ENCODE measurements at regions of chr3 and their contacts with region 1.

Region 1: DNA sequence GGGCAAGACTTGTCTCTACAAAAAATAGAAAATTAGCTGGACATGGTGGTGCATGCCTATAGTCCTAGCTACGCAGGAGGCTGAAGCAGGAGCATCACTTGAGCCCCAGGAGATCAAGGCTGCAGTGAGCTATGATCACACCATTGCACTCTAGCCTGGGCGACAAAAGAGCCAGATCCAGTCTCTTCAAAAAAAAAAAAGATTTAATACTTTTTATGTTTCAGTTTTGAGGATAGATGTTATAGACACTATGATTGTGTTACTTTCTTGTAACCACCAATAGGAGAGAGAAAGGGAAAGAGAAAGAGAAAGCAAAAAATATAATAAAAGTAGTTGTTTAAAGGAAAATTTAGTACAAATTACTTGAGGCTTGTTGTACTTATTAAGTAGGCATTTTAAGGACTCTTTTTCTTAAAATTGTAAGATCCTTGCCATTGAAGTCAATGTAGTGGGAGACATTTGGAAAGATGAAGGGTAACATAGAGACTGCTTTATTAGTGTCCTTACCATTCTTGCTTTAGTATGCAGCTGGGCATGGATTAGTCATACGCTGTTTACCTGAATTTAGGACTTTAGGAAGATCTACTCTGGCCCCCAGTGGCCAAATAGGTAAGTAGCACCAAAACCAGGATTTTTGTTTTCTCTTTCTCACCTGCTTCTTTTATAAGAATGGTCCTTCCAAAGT is 35.1 kb upstream of the ZDHHC23 start:
- DNase-seq: peak in 22 of 35 experiments; percentile 0 to 69 (median 10)
- ATAC-seq: peak; percentile 85 to 96 (median 94)
- H3K4me3 ChIP-seq: no peak overlapping the region
- H3K4me3 Mint-ChIP-seq: peak overlapping the region in 2 of 3 donors; percentile 29 to 49
- H3K27ac ChIP-seq: no peak overlapping the region
- H3K27ac Mint-ChIP-seq: peak overlapping the region; percentile 42 to 44
- H3K4me1 ChIP-seq: no peaks in the 10 kb centered on the region
- H3K4me1 Mint-ChIP-seq: peaks cover 6 to 8% (median 8%) of the 10 kb centered on the region in 3 donors
- H3K27me3 ChIP-seq: no peaks in the 10 kb centered on the region
- H3K27me3 Mint-ChIP-seq: no peaks in the 10 kb centered on the region

Region 2: GRCh38 chr3:113769551-113769950 is 143.1 kb before region 1 on chr3:
- CTCF ChIA-PET with region 1: no interaction called
- POLR2A ChIA-PET with region 1: interaction called in 1 of 2 experiments, 14 read pairs
- DNase-seq: no peak
- ATAC-seq: no peak
- H3K4me3 ChIP-seq: no peak overlapping the region
- H3K4me3 Mint-ChIP-seq: no peak overlapping the region
- H3K27ac ChIP-seq: no peak overlapping the region
- H3K27ac Mint-ChIP-seq: no peak overlapping the region
- H3K4me1 ChIP-seq: peaks cover 0 to 3% of the 10 kb centered on the region in 2 experiments
- H3K4me1 Mint-ChIP-seq: peaks cover 6 to 14% (median 10%) of the 10 kb centered on the region in 3 donors
- H3K27me3 ChIP-seq: no peaks in the 10 kb centered on the region
- H3K27me3 Mint-ChIP-seq: no peaks in the 10 kb centered on the region

Region 3: GRCh38 chr3:113844622-113845222 is 68.0 kb before region 1 on chr3:
- CTCF ChIA-PET with region 1: interaction called, 3 to 10 read pairs
- POLR2A ChIA-PET with region 1: no interaction called
- DNase-seq: peak in 1 of 35 experiments; percentile 50
- ATAC-seq: peak in 1 of 4 experiments; percentile 42
- H3K4me3 ChIP-seq: no peak overlapping the region
- H3K4me3 Mint-ChIP-seq: no peak overlapping the region
- H3K27ac ChIP-seq: no peak overlapping the region
- H3K27ac Mint-ChIP-seq: no peak overlapping the region
- H3K4me1 ChIP-seq: no peaks in the 10 kb centered on the region
- H3K4me1 Mint-ChIP-seq: no peaks in the 10 kb centered on the region
- H3K27me3 ChIP-seq: no peaks in the 10 kb centered on the region
- H3K27me3 Mint-ChIP-seq: no peaks in the 10 kb centered on the region

Region 4: DNA sequence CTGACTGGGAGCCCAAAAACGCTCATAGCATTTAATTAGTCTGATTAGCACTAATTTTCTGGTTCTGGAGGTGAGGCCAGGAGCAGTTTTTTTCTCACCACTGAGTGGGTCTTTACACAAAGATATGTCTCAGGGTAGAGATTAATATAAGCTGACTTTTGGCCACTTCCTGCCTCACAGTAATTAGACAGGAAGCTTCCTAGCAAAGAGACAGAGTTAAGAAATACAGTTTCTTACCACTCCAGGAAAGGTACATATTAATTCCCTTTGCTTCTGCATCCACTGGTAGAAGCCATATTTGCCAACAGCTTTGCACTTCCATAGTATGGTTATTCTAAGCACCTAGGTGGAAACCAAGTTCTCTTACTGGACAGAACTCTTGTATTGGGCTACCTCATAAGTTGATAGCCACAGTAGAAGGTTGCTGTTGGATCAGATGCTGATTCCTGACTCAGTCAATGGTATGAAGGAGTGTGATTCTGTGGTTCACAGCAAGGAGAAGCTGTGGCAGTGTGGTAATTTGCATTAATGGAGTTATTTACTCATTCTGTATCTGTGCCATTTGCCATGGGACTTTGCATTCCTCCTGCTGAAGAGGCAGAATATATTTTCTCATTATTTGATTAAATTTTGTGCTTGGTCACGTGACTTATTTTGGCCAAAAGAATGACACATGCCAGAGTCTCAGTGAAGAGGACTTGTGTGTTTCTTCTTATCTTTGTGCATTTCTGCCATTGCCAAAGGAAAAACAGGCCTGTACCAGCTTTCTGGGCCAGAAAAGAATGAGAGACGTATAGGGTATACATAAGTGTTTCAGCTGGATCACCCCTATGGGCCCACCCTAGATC is 1251.9 kb after region 1 on chr3:
- CTCF ChIA-PET with region 1: interaction called in 1 of 2 experiments, 12 read pairs
- POLR2A ChIA-PET with region 1: no interaction called
- DNase-seq: peak in 1 of 35 experiments; percentile 34
- ATAC-seq: peak in 2 of 4 experiments; percentile 40 to 47
- H3K4me3 ChIP-seq: no peak overlapping the region
- H3K4me3 Mint-ChIP-seq: peak overlapping the region in 1 of 3 donors; percentile 52
- H3K27ac ChIP-seq: peak overlapping the region; percentile 63
- H3K27ac Mint-ChIP-seq: peak overlapping the region; percentile 91 to 93
- H3K4me1 ChIP-seq: peaks cover 21 to 24% of the 10 kb centered on the region in 2 experiments
- H3K4me1 Mint-ChIP-seq: peaks cover 35 to 38% (median 35%) of the 10 kb centered on the region in 3 donors
- H3K27me3 ChIP-seq: no peaks in the 10 kb centered on the region
- H3K27me3 Mint-ChIP-seq: no peaks in the 10 kb centered on the region

Measured in T-cell (primary cell).